ENCODE measurements at regions of chr10 and their contacts with region 1.

Region 1: DNA sequence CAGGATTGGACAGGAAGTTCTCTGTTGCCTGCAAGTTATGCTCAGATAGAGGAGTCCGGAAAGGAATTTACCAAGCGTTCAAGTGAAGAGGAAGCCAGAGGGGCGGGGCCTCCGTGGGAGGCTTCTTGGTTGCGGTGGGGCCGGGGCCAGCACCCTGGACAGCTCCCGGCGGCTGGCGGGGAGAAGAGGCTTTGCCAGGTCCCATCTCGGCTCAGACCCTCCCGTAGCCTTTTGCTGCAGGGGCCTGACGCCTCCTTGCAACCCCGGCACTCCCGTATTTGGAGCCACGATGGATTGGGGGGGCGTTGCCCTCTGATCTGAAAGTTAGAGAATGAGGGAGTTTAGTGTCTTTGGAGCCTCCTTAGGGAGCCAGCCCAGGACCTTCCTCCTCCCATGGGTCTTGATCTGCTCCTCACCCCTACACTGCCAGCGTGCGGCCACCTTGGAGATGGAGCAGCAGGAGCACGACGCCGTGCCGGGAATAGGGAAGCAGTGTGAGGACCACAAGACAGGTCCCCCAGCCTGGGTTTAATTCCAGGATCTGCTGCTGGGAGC is 3.1 kb upstream of the SLC18A3 start:
- DNase-seq: peak; percentile 45
- ATAC-seq: peak; percentile 96
- H3K4me3 ChIP-seq: no peak overlapping the region
- H3K27ac ChIP-seq: no peak overlapping the region
- H3K4me1 ChIP-seq: no peaks in the 10 kb centered on the region
- H3K27me3 ChIP-seq: peaks cover 50% of the 10 kb centered on the region
- CTCF ChIP-seq: no peak
- POLR2A ChIP-seq: no peak
- RAD21 ChIP-seq: no peak

Region 2: GRCh38 chr10:48981310-48981907 is 625.6 kb before region 1 on chr10:
- CTCF ChIA-PET with region 1: no interaction called
- POLR2A ChIA-PET with region 1: no interaction called
- dilution Hi-C with region 1: no loop called
- in situ Hi-C with region 1: no loop called
- intact Hi-C with region 1: no loop called
- DNase-seq: peak; percentile 41
- ATAC-seq: peak; percentile 95
- H3K4me3 ChIP-seq: no peak overlapping the region
- H3K27ac ChIP-seq: no peak overlapping the region
- H3K4me1 ChIP-seq: no peaks in the 10 kb centered on the region
- H3K27me3 ChIP-seq: peaks cover 18% of the 10 kb centered on the region
- CTCF ChIP-seq: peak; percentile 67
- POLR2A ChIP-seq: no peak
- RAD21 ChIP-seq: peak; percentile 79

Region 3: DNA sequence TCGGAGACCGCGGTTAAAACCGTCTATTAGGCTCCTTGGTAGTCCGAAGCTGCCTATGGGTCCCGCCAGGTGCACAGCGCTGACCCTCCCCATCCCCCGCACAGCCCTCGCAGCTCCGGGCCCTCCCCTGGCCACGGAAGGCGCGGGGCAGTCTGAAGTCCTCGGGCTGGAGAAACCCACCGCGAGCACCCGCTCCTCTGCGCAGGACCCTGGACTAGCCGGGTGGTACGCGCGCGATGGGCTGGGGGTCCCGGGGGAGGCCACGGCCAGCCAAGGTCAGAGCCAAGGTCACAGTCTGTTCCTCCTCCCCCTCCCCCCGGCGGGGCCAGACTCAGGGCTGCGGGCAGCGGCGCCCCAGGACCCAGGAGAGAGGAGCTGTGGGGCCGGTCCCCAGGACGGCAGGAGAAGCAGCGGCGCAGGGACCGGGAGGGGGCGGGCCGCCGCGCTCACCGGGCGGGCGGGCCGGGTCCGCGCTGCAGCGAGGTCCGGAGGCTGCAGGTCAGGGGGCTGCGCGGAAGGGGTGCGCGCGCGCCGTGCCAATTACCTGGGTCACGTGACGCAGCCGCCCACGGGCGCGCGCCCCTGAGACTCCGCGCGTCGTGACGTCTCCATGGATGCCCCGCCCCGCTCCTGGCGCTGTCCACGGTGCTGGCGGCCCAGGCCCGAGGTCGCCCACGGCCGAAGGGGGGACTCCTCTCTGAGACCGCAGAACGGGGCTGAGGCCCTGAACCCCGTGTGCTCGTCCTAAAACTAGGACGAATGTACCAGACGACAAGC is 154.9 kb after region 1 on chr10 and contains the start of gene OGDHL:
- CTCF ChIA-PET with region 1: no interaction called
- POLR2A ChIA-PET with region 1: no interaction called
- dilution Hi-C with region 1: no loop called
- in situ Hi-C with region 1: no loop called
- intact Hi-C with region 1: loop called (anchors 5 kb)
- DNase-seq: peak; percentile 19
- ATAC-seq: peak; percentile 99
- H3K4me3 ChIP-seq: peak within 1 kb of the TSS; percentile 42
- H3K27ac ChIP-seq: no peak within 1 kb of the TSS
- H3K4me1 ChIP-seq: no peaks in the 10 kb centered on the region
- H3K27me3 ChIP-seq: peaks cover 11% of the 10 kb centered on the region
- CTCF ChIP-seq: no peak
- POLR2A ChIP-seq: no peak
- RAD21 ChIP-seq: no peak
- total RNA-seq, gene OGDHL: under 0.01 and 0.18 TPM in 2 replicates